ENCODE measurements at regions of chr17 and their contacts with region 1.

Region 1: DNA sequence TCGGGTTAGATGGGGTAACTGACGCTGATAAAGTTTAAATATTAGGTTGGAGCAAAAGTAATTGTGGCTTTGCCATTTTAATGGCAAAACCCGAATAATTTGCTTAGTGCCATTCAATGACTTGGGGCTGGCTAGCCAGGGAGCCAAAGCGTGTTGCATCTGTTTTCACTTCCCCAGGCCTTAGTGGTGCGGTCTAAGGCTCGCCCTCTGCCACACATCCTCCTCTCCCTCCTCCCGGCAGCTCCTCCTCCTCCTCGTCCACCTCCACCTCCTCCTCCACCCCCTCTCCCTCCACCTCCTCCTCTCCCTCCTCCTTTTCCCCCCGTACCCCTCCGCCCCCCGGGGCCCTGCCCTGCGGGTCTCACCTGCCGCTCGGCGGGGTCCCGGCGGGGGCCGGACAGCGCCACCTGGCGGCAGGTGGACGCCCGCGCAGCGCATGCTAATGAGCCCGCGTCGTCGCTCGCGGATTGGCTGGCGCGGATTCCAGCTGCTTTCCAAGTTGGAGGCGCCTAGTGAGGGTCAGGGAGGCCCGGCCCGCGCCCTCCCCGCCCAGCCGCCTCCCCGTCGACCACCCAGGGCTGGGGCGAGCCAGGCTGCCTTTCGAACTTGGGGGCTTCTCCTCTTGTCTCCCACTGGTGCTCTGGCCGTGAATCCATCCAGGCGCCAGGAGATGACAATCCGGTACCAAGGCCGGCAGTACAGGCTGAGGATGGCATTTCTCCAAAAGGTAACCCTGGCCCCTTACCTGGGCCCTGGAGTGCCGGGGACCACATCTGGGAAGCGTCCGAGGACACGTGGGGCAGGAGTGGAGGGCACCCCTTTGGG is 36.6 kb upstream of the RGS9 start:
- DNase-seq: peak; percentile 71 to 78 (median 76)
- H3K4me3 ChIP-seq: peak overlapping the region; percentile 35 to 77 (median 43)
- H3K4me3 Mint-ChIP-seq: peak overlapping the region; percentile 75
- H3K27ac ChIP-seq: peak overlapping the region in 1 of 2 donors; percentile 82
- H3K27ac Mint-ChIP-seq: peak overlapping the region; percentile 49 to 93 (median 88)
- H3K4me1 ChIP-seq: peaks cover 9 to 14% of the 10 kb centered on the region in 2 donors
- H3K4me1 Mint-ChIP-seq: peaks cover 9% of the 10 kb centered on the region
- H3K27me3 ChIP-seq: no peaks in the 10 kb centered on the region
- H3K27me3 Mint-ChIP-seq: peaks cover 0 to 15% (median 0%) of the 10 kb centered on the region in 3 donors
- CTCF ChIP-seq: peak; percentile 89

Region 2: GRCh38 chr17:64968652-64969501 is 131.7 kb before region 1 on chr17:
- intact Hi-C with region 1: loop called in 1 of 2 experiments (anchors 5 kb)
- DNase-seq: no peak
- H3K4me3 ChIP-seq: no peak overlapping the region
- H3K4me3 Mint-ChIP-seq: no peak overlapping the region
- H3K27ac ChIP-seq: no peak overlapping the region
- H3K27ac Mint-ChIP-seq: peak overlapping the region in 3 of 7 donors; percentile 22 to 33 (median 25)
- H3K4me1 ChIP-seq: peaks cover 15 to 24% of the 10 kb centered on the region in 2 donors
- H3K4me1 Mint-ChIP-seq: peaks cover 25% of the 10 kb centered on the region
- H3K27me3 ChIP-seq: no peaks in the 10 kb centered on the region
- H3K27me3 Mint-ChIP-seq: peaks cover 0 to 1% (median 0%) of the 10 kb centered on the region in 3 donors
- CTCF ChIP-seq: no peak

Region 3: GRCh38 chr17:65163990-65164495 is 63.5 kb after region 1 on chr17:
- intact Hi-C with region 1: no loop called
- DNase-seq: peak in 2 of 3 donors; percentile 3 to 68
- H3K4me3 ChIP-seq: no peak overlapping the region
- H3K4me3 Mint-ChIP-seq: no peak overlapping the region
- H3K27ac ChIP-seq: no peak overlapping the region
- H3K27ac Mint-ChIP-seq: no peak overlapping the region
- H3K4me1 ChIP-seq: no peaks in the 10 kb centered on the region
- H3K4me1 Mint-ChIP-seq: no peaks in the 10 kb centered on the region
- H3K27me3 ChIP-seq: no peaks in the 10 kb centered on the region
- H3K27me3 Mint-ChIP-seq: peaks cover 0 to 3% (median 2%) of the 10 kb centered on the region in 3 donors
- CTCF ChIP-seq: no peak

Region 4: DNA sequence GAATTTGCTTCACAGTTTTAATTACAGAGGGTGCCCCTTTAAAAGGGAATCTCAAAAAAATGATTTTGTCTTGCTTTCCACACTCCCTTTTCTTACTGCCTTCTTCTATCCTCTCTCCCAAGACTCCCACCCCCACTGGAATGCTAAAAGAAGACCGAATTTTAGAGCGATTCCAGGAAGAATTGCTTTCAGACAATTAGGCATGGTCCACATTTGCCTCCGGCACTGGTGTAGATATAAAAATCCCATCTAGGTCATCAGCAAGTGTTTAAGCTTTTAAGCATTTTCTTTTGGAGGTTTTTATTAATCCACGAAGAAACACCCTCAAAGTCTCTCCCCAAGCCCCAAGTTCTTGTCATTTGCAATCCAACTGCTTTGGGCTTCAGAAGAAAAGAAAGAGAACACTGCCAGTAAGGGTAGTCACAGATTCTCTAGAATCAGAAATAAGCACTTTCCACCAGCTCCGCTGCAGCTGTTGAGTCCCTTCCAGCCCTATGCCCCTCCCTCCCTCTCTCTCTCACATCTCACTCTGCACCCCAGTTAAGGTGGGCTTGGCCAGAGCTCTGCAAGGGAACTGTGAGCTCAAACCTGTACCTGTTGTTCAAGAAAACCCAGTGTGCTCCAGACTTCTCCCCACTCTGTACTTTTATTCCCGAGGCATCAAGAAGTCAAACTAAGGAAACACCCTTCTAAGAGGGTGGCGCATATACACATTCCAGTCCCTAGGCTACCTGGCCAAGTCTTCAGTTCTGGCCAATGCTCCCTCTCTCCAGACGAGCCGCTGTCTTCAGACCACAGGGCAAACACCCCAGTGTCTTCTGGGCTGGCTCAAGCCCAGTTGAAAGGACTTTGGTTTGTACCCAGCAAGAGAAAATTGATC is 206.8 kb after region 1 on chr17:
- intact Hi-C with region 1: no loop called
- DNase-seq: no peak
- H3K4me3 ChIP-seq: no peak overlapping the region
- H3K4me3 Mint-ChIP-seq: no peak overlapping the region
- H3K27ac ChIP-seq: no peak overlapping the region
- H3K27ac Mint-ChIP-seq: no peak overlapping the region
- H3K4me1 ChIP-seq: no peaks in the 10 kb centered on the region
- H3K4me1 Mint-ChIP-seq: no peaks in the 10 kb centered on the region
- H3K27me3 ChIP-seq: peaks cover 0 to 4% of the 10 kb centered on the region in 2 donors
- H3K27me3 Mint-ChIP-seq: peaks cover 7 to 15% (median 9%) of the 10 kb centered on the region in 3 donors
- CTCF ChIP-seq: no peak